Activated naive CD4-positive, alpha-beta T cell treated with anti-CD3 and anti-CD28 coated beads, Interleukin-2, amount 10 ng/mL, durations not matched to agents 7 days and 5 days (primary cell): ENCODE measurements at regions of chr15 and their contacts with region 1.

Region 1: GRCh38 chr15:85412956-85413854 is 32.8 kb downstream of the AKAP13 start:
- DNase-seq: peak; percentile 82
- H3K4me3 Mint-ChIP-seq: peak overlapping the region; percentile 47
- H3K27ac Mint-ChIP-seq: peak overlapping the region; percentile 86
- H3K4me1 Mint-ChIP-seq: peaks cover 60% of the 10 kb centered on the region
- H3K27me3 Mint-ChIP-seq: no peaks in the 10 kb centered on the region

Region 2: DNA sequence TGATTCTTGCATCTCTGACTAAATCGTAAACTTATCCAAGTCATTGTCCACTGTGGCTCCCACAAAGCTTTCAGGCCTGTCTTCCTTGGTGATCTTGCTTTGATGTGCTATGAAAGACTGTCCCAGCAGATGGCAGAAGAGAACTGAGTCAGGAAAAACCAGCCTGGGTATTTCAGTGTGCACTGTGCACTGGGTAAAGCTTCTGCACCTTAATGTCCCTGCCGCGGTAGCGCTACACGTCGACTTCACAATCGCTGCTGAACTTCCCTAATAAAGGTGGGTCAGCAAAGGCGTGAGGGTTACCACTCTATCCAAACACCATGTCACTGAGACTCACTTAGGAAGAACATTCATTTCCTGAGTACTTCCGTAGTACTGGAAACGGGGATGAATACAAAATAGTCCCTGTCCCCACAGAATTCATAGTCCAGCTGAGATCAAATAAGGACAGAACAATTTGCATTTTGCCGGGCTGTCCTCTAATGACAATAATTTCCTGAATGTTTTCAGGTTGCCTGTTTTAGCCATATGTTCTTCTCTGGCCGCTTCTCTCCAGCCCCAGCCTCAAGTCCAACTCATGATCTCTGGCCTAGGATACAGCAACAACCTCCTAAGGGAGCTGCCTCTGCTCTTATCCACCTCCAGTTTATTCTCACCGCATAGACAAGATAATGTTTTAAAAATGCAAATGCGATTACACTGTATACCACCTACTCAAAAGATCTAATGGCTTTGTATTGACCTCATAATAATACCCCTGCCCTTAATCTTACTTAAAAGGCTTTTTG is 116.4 kb before region 1 on chr15:
- CTCF ChIA-PET with region 1: interaction called, 125 read pairs
- DNase-seq: peak; percentile 78
- H3K4me3 Mint-ChIP-seq: no peak overlapping the region
- H3K27ac Mint-ChIP-seq: no peak overlapping the region
- H3K4me1 Mint-ChIP-seq: peaks cover 15% of the 10 kb centered on the region
- H3K27me3 Mint-ChIP-seq: peaks cover 7% of the 10 kb centered on the region

Region 3: DNA sequence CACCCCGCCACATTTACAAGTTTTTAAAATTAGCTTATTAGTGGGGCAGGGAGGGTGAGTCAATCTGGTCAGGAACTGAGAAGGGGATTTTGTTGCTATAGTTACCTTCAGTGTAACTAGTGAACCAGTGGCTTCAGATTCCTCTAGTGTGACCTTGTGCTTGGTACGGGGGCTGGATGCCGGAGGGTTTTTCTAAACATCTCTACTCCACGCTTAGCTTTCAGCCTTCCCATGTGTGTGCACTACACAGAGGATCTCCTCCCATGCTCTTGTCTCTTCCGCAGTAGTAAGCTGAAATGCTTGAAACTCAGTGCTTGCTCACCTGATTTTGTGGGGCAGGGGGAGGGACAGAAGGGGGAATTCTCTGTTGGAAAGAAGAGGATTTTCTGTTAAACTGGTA is 100.7 kb before region 1 on chr15:
- CTCF ChIA-PET with region 1: interaction called, 13 read pairs
- DNase-seq: no peak
- H3K4me3 Mint-ChIP-seq: no peak overlapping the region
- H3K27ac Mint-ChIP-seq: no peak overlapping the region
- H3K4me1 Mint-ChIP-seq: peaks cover 52% of the 10 kb centered on the region
- H3K27me3 Mint-ChIP-seq: peaks cover 11% of the 10 kb centered on the region

Region 4: GRCh38 chr15:85318048-85318731 is 95.0 kb before region 1 on chr15:
- CTCF ChIA-PET with region 1: interaction called, 13 read pairs
- DNase-seq: peak; percentile 28
- H3K4me3 Mint-ChIP-seq: no peak overlapping the region
- H3K27ac Mint-ChIP-seq: peak overlapping the region; percentile 67
- H3K4me1 Mint-ChIP-seq: peaks cover 48% of the 10 kb centered on the region
- H3K27me3 Mint-ChIP-seq: peaks cover under 1% of the 10 kb centered on the region

Region 5: DNA sequence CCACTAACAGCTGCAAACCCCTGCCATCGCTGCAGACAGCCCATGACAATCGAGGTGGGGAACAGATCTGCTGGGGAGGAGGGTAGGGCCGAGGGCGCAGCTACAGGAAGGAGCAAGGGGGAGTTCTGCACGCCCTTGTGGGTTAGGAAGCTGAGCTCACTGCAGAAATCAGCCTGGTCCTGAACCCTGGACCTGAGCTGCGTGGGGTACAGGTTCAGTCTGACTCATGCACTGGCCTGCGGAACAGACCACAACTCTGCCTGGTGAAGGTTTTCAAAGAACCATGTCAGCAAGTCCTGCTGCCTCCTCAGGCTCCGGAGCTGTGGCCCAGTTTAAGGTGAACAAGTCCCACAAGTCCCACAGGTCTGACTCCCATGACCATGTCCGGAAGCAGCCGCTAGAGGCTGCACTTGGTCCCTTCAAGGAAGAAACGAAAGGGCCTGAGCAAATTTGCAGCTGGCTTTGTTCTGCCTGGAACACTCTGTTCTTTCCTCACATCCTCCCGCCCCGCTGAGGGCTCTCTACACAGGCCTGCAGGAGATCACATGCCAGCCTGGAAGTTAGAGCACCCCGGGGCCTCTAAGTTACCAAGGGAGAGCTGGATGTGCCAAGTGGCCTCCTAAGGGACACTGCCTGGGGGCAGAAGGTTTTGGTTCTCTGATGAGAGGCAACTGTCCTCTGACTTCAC is 82.2 kb before region 1 on chr15:
- CTCF ChIA-PET with region 1: interaction called, 83 read pairs
- DNase-seq: peak; percentile 82
- H3K4me3 Mint-ChIP-seq: peak overlapping the region; percentile 84
- H3K27ac Mint-ChIP-seq: peak overlapping the region; percentile 99
- H3K4me1 Mint-ChIP-seq: peaks cover 56% of the 10 kb centered on the region
- H3K27me3 Mint-ChIP-seq: peaks cover 12% of the 10 kb centered on the region

Region 6: GRCh38 chr15:85380217-85380811 is 32.9 kb before region 1 on chr15 and contains the start of gene AKAP13:
- CTCF ChIA-PET with region 1: interaction called, 18 read pairs
- DNase-seq: peak; percentile 97
- H3K4me3 Mint-ChIP-seq: peak within 1 kb of the TSS; percentile 76
- H3K27ac Mint-ChIP-seq: peak within 1 kb of the TSS; percentile 97
- H3K4me1 Mint-ChIP-seq: peaks cover 67% of the 10 kb centered on the region
- H3K27me3 Mint-ChIP-seq: no peaks in the 10 kb centered on the region

Region 7: DNA sequence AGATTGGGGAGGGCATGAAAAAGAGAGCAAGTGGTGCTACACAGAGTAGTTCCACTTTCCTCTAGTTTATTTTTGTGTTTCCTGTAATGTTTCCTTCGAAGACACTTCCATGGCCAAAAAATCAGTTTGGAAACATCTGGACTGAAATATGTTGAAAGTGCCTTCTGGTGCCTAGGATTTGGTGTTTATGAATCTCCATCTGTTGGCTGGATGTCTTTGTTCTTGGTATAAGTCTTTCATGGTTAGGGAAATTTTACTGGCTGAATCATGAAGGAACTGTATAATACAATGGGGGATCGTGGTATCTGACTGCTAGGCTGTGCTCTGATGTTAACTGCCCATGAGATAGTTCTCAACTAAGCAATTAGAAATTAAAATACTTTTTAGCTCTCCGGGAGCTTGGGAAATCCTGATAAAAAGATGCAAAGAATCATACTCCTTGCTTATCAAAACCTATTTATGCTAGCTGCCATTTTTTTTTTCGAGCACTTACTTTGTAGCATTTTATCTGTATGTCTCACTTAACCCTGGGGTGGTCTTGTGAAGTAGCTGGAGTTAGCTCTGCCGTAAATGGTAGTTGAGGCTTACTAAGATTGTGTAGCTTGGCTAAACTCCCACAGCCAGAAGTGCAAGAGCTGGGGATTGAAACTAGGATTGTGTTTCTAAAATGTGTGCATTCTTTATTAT is 10.9 kb before region 1 on chr15:
- CTCF ChIA-PET with region 1: interaction called, 33 read pairs
- DNase-seq: no peak
- H3K4me3 Mint-ChIP-seq: no peak overlapping the region
- H3K27ac Mint-ChIP-seq: no peak overlapping the region
- H3K4me1 Mint-ChIP-seq: peaks cover 55% of the 10 kb centered on the region
- H3K27me3 Mint-ChIP-seq: no peaks in the 10 kb centered on the region